ENCODE measurements at regions of chr22 and their contacts with region 1.

Region 1: GRCh38 chr22:21014202-21014725 is 701 bp upstream of the P2RX6 start:
- DNase-seq: peak; percentile 88 to 93 (median 91)
- H3K4me3 ChIP-seq: peak overlapping the region; percentile 40
- H3K27ac ChIP-seq: peak overlapping the region; percentile 51 to 83
- H3K4me1 ChIP-seq: peaks cover 6% of the 10 kb centered on the region
- H3K27me3 ChIP-seq: no peaks in the 10 kb centered on the region
- CTCF ChIP-seq: no peak
- EP300 ChIP-seq: no peak
- POLR2A ChIP-seq: no peak

Region 2: DNA sequence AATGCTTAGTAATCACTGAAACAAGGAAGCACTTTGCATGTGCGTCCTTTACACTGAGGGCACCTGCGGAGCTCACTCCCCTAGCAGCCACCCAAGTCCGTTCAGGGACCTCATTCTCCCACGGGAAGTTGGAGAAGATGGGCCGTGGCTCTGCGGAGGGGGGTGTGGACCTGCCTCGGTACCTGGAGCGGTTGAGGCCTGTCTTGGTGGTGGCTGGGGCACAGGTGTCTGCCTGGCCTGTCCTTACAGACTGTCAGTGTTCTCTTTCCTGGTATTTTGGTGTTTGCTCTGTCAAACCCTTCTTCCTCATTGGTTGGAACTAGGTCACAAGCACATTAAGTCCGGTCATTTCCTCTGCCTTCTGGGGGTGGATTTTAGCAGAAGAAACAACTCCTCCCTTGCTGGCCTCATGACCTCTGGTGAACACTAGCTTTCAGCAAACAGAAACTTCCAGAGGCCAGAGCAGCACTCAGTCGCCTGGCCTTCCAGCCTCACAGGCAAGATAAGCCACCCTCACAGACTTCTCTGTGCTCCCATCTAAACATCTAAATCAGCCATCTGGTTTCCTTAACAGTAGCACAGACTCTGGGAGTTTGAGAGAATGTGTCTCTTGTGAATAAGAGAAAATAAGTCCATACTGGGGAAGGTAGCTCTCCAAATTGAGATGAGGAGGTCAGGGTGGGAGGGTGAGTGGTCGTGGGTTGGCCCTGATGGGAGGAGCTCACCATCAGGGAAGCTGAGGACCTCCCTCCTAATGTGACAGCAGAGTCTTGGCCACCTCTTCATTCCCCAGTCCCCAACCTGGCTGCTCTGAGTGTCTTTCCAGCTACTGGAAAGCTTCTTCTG is 146.9 kb before region 1 on chr22:
- intact Hi-C with region 1: loop called in 1 of 4 experiments (anchors 10 kb)
- DNase-seq: peak in 4 of 5 donors; percentile 36 to 60 (median 59)
- H3K4me3 ChIP-seq: no peak overlapping the region
- H3K27ac ChIP-seq: peak overlapping the region; percentile 44 to 51
- H3K4me1 ChIP-seq: peaks cover 15% of the 10 kb centered on the region
- H3K27me3 ChIP-seq: no peaks in the 10 kb centered on the region
- CTCF ChIP-seq: no peak
- EP300 ChIP-seq: no peak
- POLR2A ChIP-seq: no peak

Region 3: DNA sequence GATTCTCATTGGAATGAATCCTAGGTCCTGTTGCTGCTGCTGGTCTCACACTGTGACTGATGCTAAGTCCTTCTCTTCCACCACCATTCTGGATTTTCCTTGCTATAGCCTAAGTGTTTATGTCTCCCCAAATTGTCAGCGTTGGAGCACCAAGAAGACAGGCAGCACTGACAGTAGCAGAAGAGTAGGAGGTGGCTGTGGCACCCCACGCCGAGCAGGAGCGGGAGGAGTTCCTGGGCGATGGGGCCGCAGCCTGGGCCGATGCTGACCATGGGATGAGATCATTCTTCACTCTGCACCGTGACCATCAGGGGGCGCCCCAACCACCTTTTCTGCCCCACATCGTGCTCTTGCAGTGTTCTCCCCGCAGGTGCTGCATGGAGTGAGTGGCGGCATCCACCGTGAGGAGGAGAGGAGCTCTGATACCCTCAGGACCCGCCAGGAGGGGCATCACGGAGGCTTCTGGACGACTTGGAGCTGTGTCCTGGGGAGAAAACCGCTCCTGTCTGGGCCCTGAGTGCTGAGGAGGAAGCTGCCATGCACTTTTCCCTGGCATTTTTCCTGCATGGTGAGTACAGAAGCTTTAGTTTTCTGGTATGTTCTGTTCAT is 88.5 kb after region 1 on chr22:
- intact Hi-C with region 1: no loop called
- DNase-seq: peak; percentile 32 to 78 (median 63)
- H3K4me3 ChIP-seq: no peak overlapping the region
- H3K27ac ChIP-seq: no peak overlapping the region
- H3K4me1 ChIP-seq: no peaks in the 10 kb centered on the region
- H3K27me3 ChIP-seq: no peaks in the 10 kb centered on the region
- CTCF ChIP-seq: peak; percentile 29 to 59 (median 32)
- EP300 ChIP-seq: no peak
- POLR2A ChIP-seq: no peak